ENCODE measurements at regions of chr2 and their contacts with region 1.

Region 1: GRCh38 chr2:95076784-95077529 is 44.7 kb downstream of the MRPS5 start:
- DNase-seq: peak; percentile 89
- H3K4me3 Mint-ChIP-seq: peak overlapping the region; percentile 90
- H3K27ac Mint-ChIP-seq: peak overlapping the region; percentile 99
- H3K4me1 Mint-ChIP-seq: peaks cover 76% of the 10 kb centered on the region
- H3K27me3 Mint-ChIP-seq: no peaks in the 10 kb centered on the region

Region 2: GRCh38 chr2:95022309-95023221 is 54.4 kb before region 1 on chr2:
- intact Hi-C with region 1: loop called (anchors 1 kb)
- DNase-seq: peak; percentile 82
- H3K4me3 Mint-ChIP-seq: peak overlapping the region; percentile 73
- H3K27ac Mint-ChIP-seq: peak overlapping the region; percentile 85
- H3K4me1 Mint-ChIP-seq: peaks cover 41% of the 10 kb centered on the region
- H3K27me3 Mint-ChIP-seq: no peaks in the 10 kb centered on the region

Region 3: GRCh38 chr2:95050427-95050861 is 26.5 kb before region 1 on chr2:
- intact Hi-C with region 1: loop called (anchors 1 kb)
- DNase-seq: no peak
- H3K4me3 Mint-ChIP-seq: peak overlapping the region; percentile 59
- H3K27ac Mint-ChIP-seq: peak overlapping the region; percentile 97
- H3K4me1 Mint-ChIP-seq: peaks cover 84% of the 10 kb centered on the region
- H3K27me3 Mint-ChIP-seq: no peaks in the 10 kb centered on the region

Region 4: DNA sequence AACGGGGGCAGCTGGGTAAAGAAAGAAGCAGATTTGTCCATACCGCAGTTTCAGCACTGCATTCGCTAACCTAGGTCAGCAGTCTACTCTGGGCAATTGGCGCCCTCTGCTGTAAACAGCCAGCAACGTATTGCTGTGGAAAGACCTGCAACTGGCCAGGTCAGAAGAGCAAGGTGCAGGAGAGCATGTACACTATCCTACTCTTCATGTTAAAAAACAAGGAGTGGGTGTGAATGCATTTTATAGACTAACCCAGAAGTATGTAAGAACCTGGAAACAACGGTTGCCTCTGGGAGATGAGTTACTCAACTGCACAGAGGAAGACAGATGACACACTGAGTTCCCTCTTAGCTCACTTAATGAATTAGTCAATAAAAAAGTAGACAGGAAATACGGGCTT is 38.5 kb after region 1 on chr2:
- intact Hi-C with region 1: loop called (anchors 1 kb)
- DNase-seq: peak; percentile 69
- H3K4me3 Mint-ChIP-seq: no peak overlapping the region
- H3K27ac Mint-ChIP-seq: no peak overlapping the region
- H3K4me1 Mint-ChIP-seq: peaks cover 47% of the 10 kb centered on the region
- H3K27me3 Mint-ChIP-seq: no peaks in the 10 kb centered on the region

Region 5: GRCh38 chr2:95165129-95166064 is 88.4 kb after region 1 on chr2 and contains the start of gene ZNF2:
- intact Hi-C with region 1: loop called (anchors 10 kb)
- DNase-seq: peak; percentile 96
- H3K4me3 Mint-ChIP-seq: peak within 1 kb of the TSS; percentile 99
- H3K27ac Mint-ChIP-seq: peak within 1 kb of the TSS; percentile 92
- H3K4me1 Mint-ChIP-seq: peaks cover 42% of the 10 kb centered on the region
- H3K27me3 Mint-ChIP-seq: no peaks in the 10 kb centered on the region
- total RNA-seq, gene ZNF2: 3.8 and 3.9 TPM in 2 replicates

Region 6: DNA sequence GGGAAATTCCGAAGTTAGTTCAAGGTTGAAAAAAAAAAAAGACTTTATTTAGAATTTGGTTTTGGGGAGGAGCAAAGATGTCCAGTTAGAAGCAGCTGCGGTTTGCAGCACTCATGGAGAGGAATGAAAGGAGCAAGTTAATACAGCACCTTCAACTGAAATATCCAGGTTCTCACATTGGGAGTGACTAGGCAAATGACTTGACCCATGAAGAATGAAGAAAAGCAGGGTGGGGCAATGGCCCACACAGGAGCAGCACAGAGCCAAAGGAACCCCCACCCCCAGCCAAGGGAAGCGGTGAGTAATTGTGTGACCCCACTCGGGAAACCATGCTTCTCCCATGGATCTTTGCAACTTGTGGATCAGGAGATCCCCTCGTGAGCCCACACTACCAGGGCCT is 163.1 kb after region 1 on chr2:
- intact Hi-C with region 1: no loop called
- DNase-seq: no peak
- H3K4me3 Mint-ChIP-seq: no peak overlapping the region
- H3K27ac Mint-ChIP-seq: no peak overlapping the region
- H3K4me1 Mint-ChIP-seq: no peaks in the 10 kb centered on the region
- H3K27me3 Mint-ChIP-seq: no peaks in the 10 kb centered on the region

Measured in activated T-helper 1 cell treated with anti-CD3 and anti-CD28 coated beads, Interleukin-12 subunit alpha, Interleukin-12 subunit beta, Interleukin-2, Interleukin-4 antibody, amounts not matched to agents 30 ng/mL and 10 ng/mL and 1 ng/mL, durations not matched to agents 14 hours and 24 hours and 36 hours (primary cell).